ENCODE measurements at regions of chr3 and their contacts with region 1.

Region 1: DNA sequence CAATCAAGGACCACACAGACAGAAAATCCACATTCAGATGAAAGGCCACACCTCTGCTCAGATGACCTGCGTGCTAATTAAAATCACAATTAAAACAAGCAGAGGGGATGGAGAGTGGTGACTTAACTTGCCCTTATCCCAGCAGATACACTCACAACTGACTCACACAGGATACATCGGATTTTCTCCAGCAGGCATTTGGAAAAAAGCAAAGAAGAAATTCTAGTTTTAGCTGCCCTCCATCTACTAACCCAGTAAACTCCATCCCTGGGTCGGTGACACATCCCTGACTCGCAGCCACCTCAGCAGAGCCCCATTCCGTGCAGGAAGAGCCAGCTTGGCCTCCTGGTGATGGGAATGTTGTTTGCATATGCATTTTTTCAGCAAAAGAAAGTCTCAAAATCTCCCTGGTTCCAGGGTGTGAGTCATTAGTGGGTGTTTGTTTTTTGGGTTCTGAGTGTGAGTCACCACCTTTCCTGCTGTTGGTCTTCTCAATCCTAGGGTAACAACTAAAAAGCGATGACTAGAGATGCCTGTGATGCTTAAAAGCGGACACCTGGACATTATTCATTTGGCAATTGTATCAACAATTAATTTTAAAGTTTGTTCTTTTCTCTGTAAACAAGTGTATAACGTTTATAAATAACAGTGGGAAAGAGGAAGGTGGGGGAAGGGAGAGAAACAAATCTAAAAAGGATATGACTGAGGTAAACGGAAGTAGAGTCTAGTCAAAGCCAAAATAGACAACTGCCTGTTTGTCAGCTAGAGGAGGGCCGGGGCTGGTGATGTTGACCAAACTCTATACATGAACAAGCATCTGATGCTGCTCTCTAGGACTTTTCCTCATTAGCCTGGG is 49.8 kb upstream of the SLC4A7 start:
- DNase-seq: peak; percentile 98
- H3K4me3 ChIP-seq: no peak overlapping the region; the same call in 1 of the 2 replicates
- CTCF ChIP-seq: peak; percentile 79

Region 2: DNA sequence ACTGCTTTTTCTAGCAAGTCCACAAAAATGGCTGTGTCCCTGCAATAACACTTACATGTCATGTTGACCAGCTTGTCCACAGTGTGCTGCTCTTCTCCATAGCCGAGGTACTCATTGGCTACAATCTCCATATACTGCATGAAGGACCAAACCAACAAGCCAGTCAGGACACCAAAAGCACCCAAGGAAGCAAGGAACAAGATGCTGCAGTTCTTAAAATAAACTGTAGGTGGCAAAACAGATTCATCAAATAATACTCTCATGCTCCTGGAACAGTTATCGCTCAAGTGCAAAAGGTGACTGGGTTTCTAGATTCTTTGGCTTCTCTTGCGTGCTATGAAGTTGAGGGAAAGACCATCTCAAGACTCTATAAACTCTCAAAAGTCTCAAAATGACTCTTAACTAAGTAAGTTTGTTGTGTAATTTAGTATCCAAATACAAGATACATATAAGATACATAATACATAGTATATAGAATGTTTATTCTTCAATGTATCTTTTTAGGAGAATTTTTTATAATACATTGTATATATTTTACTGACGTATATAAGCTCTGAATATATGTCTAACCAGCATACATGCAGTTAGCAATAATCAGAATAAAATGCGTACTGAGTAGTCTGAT is 221.8 kb before region 1 on chr3:
- CTCF ChIA-PET with region 1: no interaction called
- POLR2A ChIA-PET with region 1: no interaction called
- DNase-seq: peak; percentile 46
- H3K4me3 ChIP-seq: no peak overlapping the region
- CTCF ChIP-seq: peak; percentile 54

Region 3: GRCh38 chr3:27454914-27455313 is 79.0 kb before region 1 on chr3:
- CTCF ChIA-PET with region 1: no interaction called
- POLR2A ChIA-PET with region 1: no interaction called
- DNase-seq: no peak
- H3K4me3 ChIP-seq: no peak overlapping the region
- CTCF ChIP-seq: no peak

Region 4: GRCh38 chr3:27521179-27521871 is 12.6 kb before region 1 on chr3:
- CTCF ChIA-PET with region 1: interaction called, 4 read pairs
- POLR2A ChIA-PET with region 1: interaction called, 13 read pairs
- DNase-seq: peak; percentile 63
- H3K4me3 ChIP-seq: no peak overlapping the region
- CTCF ChIP-seq: no peak